ENCODE measurements at regions of chr2 and their contacts with region 1.

Region 1: GRCh38 chr2:197209742-197210408 is 100.7 kb downstream of the ANKRD44 start:
- DNase-seq: peak; percentile 78
- H3K4me3 Mint-ChIP-seq: peak overlapping the region; percentile 46
- H3K27ac Mint-ChIP-seq: peak overlapping the region; percentile 97
- H3K4me1 Mint-ChIP-seq: peaks cover 99% of the 10 kb centered on the region
- H3K27me3 Mint-ChIP-seq: no peaks in the 10 kb centered on the region

Region 2: DNA sequence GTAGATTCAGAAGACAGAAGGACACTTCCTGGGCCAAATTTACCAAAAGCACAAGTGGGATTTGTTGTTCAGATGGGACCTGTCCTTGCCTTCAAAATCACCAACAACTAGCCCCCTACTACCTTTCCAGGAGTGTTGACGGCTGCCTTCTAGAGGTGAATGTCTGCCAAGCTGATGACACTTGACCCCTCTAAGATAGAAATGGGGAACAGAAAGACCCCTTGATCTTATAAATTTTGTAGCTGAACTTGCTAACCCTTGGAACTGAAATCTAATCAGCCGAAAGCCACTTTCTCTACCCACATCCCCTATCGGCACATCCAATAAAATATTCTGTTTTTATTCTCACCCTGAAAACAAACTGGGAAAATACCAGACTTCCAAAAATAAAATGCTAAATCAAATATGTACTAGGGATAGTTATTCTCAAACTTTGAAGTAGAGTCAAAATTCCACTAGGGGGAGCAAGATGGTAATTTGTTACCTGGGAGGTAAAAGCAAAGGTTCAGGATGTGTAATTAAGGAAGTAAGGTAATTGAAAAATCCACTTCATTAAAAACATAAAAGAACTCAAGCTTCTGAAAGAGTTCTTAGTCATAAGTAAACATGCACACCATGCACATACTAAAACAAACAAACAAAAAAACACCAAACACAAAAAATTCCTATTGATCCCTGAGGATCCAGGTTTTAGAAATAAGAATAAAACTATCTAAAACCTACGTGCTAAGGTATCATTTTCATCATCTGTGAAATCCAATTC is 18.5 kb before region 1 on chr2:
- CTCF ChIA-PET with region 1: interaction called, 34 read pairs
- intact Hi-C with region 1: loop called (anchors 1 kb)
- DNase-seq: no peak
- H3K4me3 Mint-ChIP-seq: peak overlapping the region; percentile 19
- H3K27ac Mint-ChIP-seq: peak overlapping the region; percentile 85
- H3K4me1 Mint-ChIP-seq: peaks cover 74% of the 10 kb centered on the region
- H3K27me3 Mint-ChIP-seq: no peaks in the 10 kb centered on the region

Region 3: GRCh38 chr2:197198890-197199289 is 11.0 kb before region 1 on chr2:
- CTCF ChIA-PET with region 1: interaction called, 34 read pairs
- intact Hi-C with region 1: loop called (anchors 1 kb)
- DNase-seq: peak; percentile 93
- H3K4me3 Mint-ChIP-seq: peak overlapping the region; percentile 83
- H3K27ac Mint-ChIP-seq: peak overlapping the region; percentile 96
- H3K4me1 Mint-ChIP-seq: peaks cover 86% of the 10 kb centered on the region
- H3K27me3 Mint-ChIP-seq: no peaks in the 10 kb centered on the region

Region 4: GRCh38 chr2:197239434-197239833 is 29.6 kb after region 1 on chr2:
- CTCF ChIA-PET with region 1: interaction called, 5 read pairs
- intact Hi-C with region 1: loop called (anchors 1 kb)
- DNase-seq: no peak
- H3K4me3 Mint-ChIP-seq: peak overlapping the region; percentile 78
- H3K27ac Mint-ChIP-seq: peak overlapping the region; percentile 91
- H3K4me1 Mint-ChIP-seq: peaks cover 85% of the 10 kb centered on the region
- H3K27me3 Mint-ChIP-seq: no peaks in the 10 kb centered on the region

Region 5: GRCh38 chr2:197261808-197262226 is 51.9 kb after region 1 on chr2:
- CTCF ChIA-PET with region 1: interaction called, 5 read pairs
- intact Hi-C with region 1: loop called (anchors 1 kb)
- DNase-seq: no peak
- H3K4me3 Mint-ChIP-seq: peak overlapping the region; percentile 62
- H3K27ac Mint-ChIP-seq: peak overlapping the region; percentile 90
- H3K4me1 Mint-ChIP-seq: peaks cover 86% of the 10 kb centered on the region
- H3K27me3 Mint-ChIP-seq: no peaks in the 10 kb centered on the region

Region 6: GRCh38 chr2:197293252-197294007 is 83.6 kb after region 1 on chr2:
- CTCF ChIA-PET with region 1: no interaction called
- intact Hi-C with region 1: loop called (anchors 1 kb)
- DNase-seq: peak; percentile 48
- H3K4me3 Mint-ChIP-seq: peak overlapping the region; percentile 57
- H3K27ac Mint-ChIP-seq: peak overlapping the region; percentile 92
- H3K4me1 Mint-ChIP-seq: peaks cover 87% of the 10 kb centered on the region
- H3K27me3 Mint-ChIP-seq: no peaks in the 10 kb centered on the region

Region 7: DNA sequence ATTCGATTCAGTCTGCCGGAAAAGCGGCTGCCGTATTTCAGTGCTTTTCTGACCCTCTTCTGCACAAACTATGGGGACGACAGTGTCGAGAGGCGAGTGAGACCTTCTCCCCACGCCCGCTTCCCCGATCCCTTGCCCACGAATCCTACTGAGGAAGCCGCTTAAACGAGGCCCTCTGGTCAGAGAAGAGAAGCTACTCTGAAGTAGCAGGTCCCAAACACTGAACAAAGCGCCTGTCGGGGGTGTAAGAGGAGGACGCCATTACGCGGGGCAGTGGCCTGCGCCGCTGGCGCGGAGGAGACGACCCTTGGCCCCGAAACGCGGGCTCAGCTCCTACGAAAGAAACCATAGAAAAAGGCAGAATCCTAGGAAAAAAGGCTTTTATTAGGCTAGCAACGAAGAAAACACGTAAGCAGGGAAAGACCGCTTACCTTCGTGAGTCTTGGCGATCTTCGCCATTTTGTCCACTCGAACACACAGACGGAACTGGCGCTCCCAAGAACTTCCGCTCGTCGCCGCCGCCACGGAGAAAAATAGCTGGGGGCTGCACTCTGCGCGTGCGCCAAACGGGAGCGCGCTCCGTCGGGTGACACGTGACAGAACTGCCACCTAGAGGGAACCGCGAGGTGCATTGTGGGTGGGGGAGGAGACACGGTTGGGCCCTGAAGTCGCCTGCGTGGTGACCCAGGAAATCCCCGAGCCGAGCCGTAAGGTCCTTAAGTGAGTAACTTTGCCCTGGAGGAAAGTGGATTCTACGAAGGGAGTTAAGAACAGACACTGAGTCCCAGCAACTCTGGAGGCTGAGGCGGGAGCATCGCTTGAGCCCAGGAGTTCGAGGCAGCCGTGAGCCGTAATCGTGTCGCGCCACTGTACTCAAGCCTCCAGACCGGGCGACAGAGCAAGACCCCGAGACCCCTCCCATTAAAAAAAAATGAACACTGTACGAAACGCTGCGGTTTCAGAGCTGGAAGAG is 225.0 kb after region 1 on chr2 and contains the start of gene SF3B1:
- CTCF ChIA-PET with region 1: no interaction called
- intact Hi-C with region 1: loop called (anchors 2 kb)
- DNase-seq: peak; percentile 100
- H3K4me3 Mint-ChIP-seq: peak within 1 kb of the TSS; percentile 99
- H3K27ac Mint-ChIP-seq: peak within 1 kb of the TSS; percentile 100
- H3K4me1 Mint-ChIP-seq: peaks cover 46% of the 10 kb centered on the region
- H3K27me3 Mint-ChIP-seq: no peaks in the 10 kb centered on the region
- total RNA-seq, gene SF3B1: 235 to 248 TPM